Spleen (tissue), 13 donors: ENCODE measurements at regions of chr17 and their contacts with region 1.

Region 1: DNA sequence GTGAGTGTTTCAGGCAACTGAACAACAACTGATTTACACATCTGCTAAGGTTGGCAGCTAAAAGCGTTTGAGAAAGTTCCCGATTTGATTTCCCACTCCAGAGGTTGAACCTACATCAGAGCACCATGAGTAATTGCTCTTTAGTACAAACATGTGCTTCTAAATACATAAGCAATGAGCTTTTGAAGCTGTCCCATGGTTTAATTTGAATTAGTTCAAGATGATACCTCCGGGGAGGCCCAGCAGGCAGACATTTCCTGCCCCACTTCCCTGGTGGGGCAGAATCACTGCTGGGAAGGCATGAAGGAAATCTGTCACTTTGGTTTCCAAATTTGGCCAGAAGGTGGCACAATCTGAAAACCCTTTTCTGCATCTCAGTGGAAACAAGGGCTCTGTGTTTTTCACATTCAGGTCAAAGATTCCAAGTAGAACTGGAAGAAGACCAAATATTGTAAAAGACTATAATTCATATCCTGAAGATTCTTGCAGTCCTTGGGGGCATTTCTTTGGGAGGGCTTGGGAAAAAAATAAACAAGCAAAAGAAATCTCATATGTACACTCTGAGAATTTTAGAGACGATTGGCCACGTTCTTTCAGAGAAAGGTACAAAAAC is 176.2 kb upstream of the FAM20A start:
- DNase-seq: no peak
- H3K4me3 ChIP-seq: no peak overlapping the region
- H3K27ac ChIP-seq: peak overlapping the region in 7 of 8 donors; percentile 39 to 77 (median 66)
- H3K4me1 ChIP-seq: peaks cover 0 to 36% (median 23%) of the 10 kb centered on the region in 6 donors
- H3K27me3 ChIP-seq: no peaks in the 10 kb centered on the region
- CTCF ChIP-seq: peak; percentile 29 to 83 (median 70)
- POLR2A ChIP-seq: no peak

Region 2: GRCh38 chr17:68704871-68705713 is 72.3 kb before region 1 on chr17:
- intact Hi-C with region 1: no loop called
- DNase-seq: no peak
- H3K4me3 ChIP-seq: no peak overlapping the region
- H3K27ac ChIP-seq: no peak overlapping the region
- H3K4me1 ChIP-seq: peaks cover 0 to 11% (median 0%) of the 10 kb centered on the region in 6 donors
- H3K27me3 ChIP-seq: no peaks in the 10 kb centered on the region
- CTCF ChIP-seq: no peak
- POLR2A ChIP-seq: no peak

Region 3: GRCh38 chr17:68832109-68832802 is 54.9 kb after region 1 on chr17:
- intact Hi-C with region 1: no loop called
- DNase-seq: no peak
- H3K4me3 ChIP-seq: no peak overlapping the region
- H3K27ac ChIP-seq: peak overlapping the region in 4 of 8 donors; percentile 6 to 49 (median 8)
- H3K4me1 ChIP-seq: peaks cover 0 to 10% (median 4%) of the 10 kb centered on the region in 6 donors
- H3K27me3 ChIP-seq: no peaks in the 10 kb centered on the region
- CTCF ChIP-seq: no peak
- POLR2A ChIP-seq: no peak

Region 4: GRCh38 chr17:69235338-69235930 is 458.1 kb after region 1 on chr17:
- intact Hi-C with region 1: loop called (anchors 5 kb)
- DNase-seq: peak; percentile 83
- H3K4me3 ChIP-seq: no peak overlapping the region
- H3K27ac ChIP-seq: peak overlapping the region in 1 of 8 donors; percentile 27
- H3K4me1 ChIP-seq: peaks cover 0 to 6% (median 2%) of the 10 kb centered on the region in 6 donors
- H3K27me3 ChIP-seq: no peaks in the 10 kb centered on the region
- CTCF ChIP-seq: peak; percentile 63 to 88 (median 76)
- POLR2A ChIP-seq: no peak